GM13977 (cell line): ENCODE measurements at regions of chr16 and their contacts with region 1.

Region 1: DNA sequence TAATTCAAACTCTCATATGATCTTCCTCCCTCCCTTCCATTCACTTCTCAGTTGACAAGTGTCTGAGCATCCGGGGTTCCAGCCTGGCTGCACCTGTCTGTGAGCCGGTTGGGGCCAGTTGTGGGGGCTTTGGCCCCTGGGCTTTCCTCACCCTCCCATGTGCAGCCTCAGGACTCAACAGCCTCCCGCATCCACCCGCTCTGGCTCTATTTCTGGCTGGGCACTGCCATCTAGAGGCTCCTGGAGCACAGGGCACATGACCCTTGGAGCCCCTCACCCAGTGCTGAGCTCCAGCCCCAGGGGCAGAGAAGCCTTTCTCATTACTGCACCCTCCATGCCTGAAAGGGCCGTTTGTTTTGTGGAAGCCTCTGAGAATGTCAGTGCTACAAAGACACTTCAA is 43.3 kb downstream of the HAPSTR1 start:
- DNase-seq: peak; percentile 59
- CTCF ChIP-seq: peak; percentile 78

Region 2: GRCh38 chr16:8567750-8568617 is 566.8 kb before region 1 on chr16:
- in situ Hi-C with region 1: loop called (anchors 25 kb)
- DNase-seq: peak; percentile 83
- CTCF ChIP-seq: peak; percentile 91

Region 3: GRCh38 chr16:8674413-8675022 is 460.2 kb before region 1 on chr16 and contains the start of gene ABAT:
- in situ Hi-C with region 1: loop called (anchors 25 kb)
- DNase-seq: peak; percentile 97
- CTCF ChIP-seq: no peak

Region 4: GRCh38 chr16:9008601-9009260 is 126.0 kb before region 1 on chr16:
- in situ Hi-C with region 1: no loop called
- DNase-seq: peak; percentile 91
- CTCF ChIP-seq: peak; percentile 87